WTC11 (cell line): ENCODE measurements at regions of chr2 and their contacts with region 1.

Region 1: DNA sequence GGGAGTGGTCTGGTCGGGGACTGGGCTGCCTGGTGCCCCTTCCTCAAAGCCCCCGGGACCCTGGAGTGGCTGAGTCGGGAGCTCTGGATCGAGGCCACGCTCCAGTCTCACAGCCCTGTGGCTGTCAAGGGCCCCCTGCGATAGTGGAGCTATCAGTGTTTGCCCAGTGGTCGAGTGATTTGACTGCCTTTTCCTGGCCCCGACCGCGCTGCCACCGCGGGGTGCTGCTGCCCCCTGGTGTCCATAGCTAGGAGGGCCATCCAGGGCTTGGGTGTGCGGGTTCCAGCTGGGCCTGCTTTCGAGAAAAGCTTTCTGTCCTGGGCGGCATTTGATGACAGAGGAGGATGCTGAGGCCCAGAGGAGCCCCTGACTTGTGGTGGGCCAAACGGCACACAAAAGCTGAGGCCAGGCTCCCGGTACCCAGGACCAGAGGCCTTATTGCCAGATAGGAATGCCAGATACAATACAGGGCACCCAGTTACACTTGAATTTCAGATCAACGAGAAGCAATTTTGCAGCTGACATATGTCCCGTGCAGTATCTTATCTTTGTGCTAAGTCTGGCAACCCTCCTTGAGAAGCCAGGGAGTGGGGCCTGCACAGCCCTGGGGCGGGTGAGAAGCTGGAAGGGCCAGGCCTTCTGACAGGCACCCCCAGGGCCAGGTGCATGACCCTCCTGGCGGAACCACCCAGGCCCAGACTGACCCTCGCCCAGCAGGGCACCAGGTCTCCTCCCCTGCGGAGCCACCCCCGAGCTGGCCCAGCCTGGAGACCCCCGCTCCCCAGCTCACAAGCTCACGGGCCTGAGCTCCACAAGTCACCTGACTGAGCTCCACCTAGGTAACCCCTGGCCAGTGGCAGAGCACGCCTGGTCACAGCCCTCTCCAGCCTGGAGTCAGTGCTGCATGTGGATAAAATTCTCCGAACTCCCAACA is 13.0 kb downstream of the ODC1 start:
- DNase-seq: peak; percentile 84
- ATAC-seq: peak; percentile 81
- H3K4me3 Mint-ChIP-seq: no peak overlapping the region
- H3K27ac Mint-ChIP-seq: no peak overlapping the region
- H3K4me1 Mint-ChIP-seq: no peaks in the 10 kb centered on the region
- H3K27me3 Mint-ChIP-seq: no peaks in the 10 kb centered on the region; the same call in 1 of the 2 replicates
- CTCF ChIP-seq: peak; percentile 87

Region 2: GRCh38 chr2:10097352-10098148 is 337.6 kb before region 1 on chr2:
- CTCF ChIA-PET with region 1: interaction called, 15 read pairs
- POLR2A ChIA-PET with region 1: no interaction called
- DNase-seq: peak; percentile 82
- ATAC-seq: peak; percentile 96
- H3K4me3 Mint-ChIP-seq: no peak overlapping the region
- H3K27ac Mint-ChIP-seq: no peak overlapping the region
- H3K4me1 Mint-ChIP-seq: peaks cover 31% of the 10 kb centered on the region
- H3K27me3 Mint-ChIP-seq: peaks cover under 1% of the 10 kb centered on the region; the same call in 1 of the 2 replicates
- CTCF ChIP-seq: peak; percentile 85; the same call in 1 of the 2 replicates

Region 3: GRCh38 chr2:10141736-10142642 is 293.2 kb before region 1 on chr2:
- CTCF ChIA-PET with region 1: interaction called, 81 read pairs
- POLR2A ChIA-PET with region 1: interaction called, 3 read pairs
- DNase-seq: peak; percentile 68
- ATAC-seq: peak; percentile 89
- H3K4me3 Mint-ChIP-seq: no peak overlapping the region
- H3K27ac Mint-ChIP-seq: no peak overlapping the region; the same call in 1 of the 2 replicates
- H3K4me1 Mint-ChIP-seq: peaks cover 5% of the 10 kb centered on the region; the same call in 1 of the 2 replicates
- H3K27me3 Mint-ChIP-seq: no peaks in the 10 kb centered on the region
- CTCF ChIP-seq: peak; percentile 60

Region 4: GRCh38 chr2:10239561-10239967 is 195.6 kb before region 1 on chr2:
- CTCF ChIA-PET with region 1: interaction called, 14 read pairs
- POLR2A ChIA-PET with region 1: no interaction called
- DNase-seq: peak; percentile 67
- ATAC-seq: peak; percentile 89
- H3K4me3 Mint-ChIP-seq: no peak overlapping the region
- H3K27ac Mint-ChIP-seq: no peak overlapping the region
- H3K4me1 Mint-ChIP-seq: no peaks in the 10 kb centered on the region
- H3K27me3 Mint-ChIP-seq: no peaks in the 10 kb centered on the region
- CTCF ChIP-seq: 0 out of 2 replicates have a peak, but pooled peaks have one; percentile 30

Region 5: GRCh38 chr2:10285556-10286198 is 149.5 kb before region 1 on chr2:
- CTCF ChIA-PET with region 1: interaction called, 10 read pairs
- POLR2A ChIA-PET with region 1: no interaction called
- DNase-seq: no peak
- ATAC-seq: peak; percentile 59
- H3K4me3 Mint-ChIP-seq: no peak overlapping the region
- H3K27ac Mint-ChIP-seq: no peak overlapping the region
- H3K4me1 Mint-ChIP-seq: peaks cover 8% of the 10 kb centered on the region
- H3K27me3 Mint-ChIP-seq: peaks cover 3% of the 10 kb centered on the region; the same call in 1 of the 2 replicates
- CTCF ChIP-seq: no peak

Region 6: DNA sequence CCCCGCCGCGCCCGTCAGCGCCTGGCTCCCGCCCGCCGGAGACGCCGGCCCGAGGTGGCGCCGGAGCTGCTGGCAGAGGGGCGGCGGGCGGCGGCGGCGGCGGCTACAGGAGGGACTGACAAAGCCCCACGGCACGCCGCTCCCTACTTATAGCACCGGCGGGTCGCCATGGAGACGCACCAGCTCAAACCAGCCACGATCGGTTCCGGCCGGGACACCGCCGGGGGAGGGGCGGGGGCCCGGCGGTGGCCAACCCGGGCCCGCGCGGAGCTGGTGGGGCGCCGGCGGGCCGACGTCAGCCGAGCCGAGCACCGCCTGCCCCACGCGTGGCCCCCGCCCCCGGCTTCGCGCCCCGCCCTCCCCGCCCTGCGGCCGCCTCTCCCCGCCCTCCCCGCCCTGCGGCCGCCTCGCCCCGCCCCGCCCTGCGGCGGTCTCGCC is 13.1 kb after region 1 on chr2 and contains the start of gene ODC1:
- CTCF ChIA-PET with region 1: interaction called, 41 read pairs
- POLR2A ChIA-PET with region 1: interaction called, 6 read pairs
- DNase-seq: peak; percentile 90
- ATAC-seq: peak; percentile 66
- H3K4me3 Mint-ChIP-seq: peak within 1 kb of the TSS; percentile 74
- H3K27ac Mint-ChIP-seq: no peak within 1 kb of the TSS
- H3K4me1 Mint-ChIP-seq: peaks cover 18% of the 10 kb centered on the region
- H3K27me3 Mint-ChIP-seq: peaks cover 22% of the 10 kb centered on the region
- CTCF ChIP-seq: no peak
- total RNA-seq, gene ODC1: 42.3 to 46.6 TPM (median 42.8 TPM) in 3 replicates